GM10248 (cell line): ENCODE measurements at regions of chr12 and their contacts with region 1.

Region 1: GRCh38 chr12:50132505-50133135 is 20.6 kb downstream of the COX14 start:
- DNase-seq: peak; percentile 42
- CTCF ChIP-seq: peak; percentile 59

Region 2: GRCh38 chr12:49998453-49998852 is 134.2 kb before region 1 on chr12:
- CTCF ChIA-PET with region 1: no interaction called
- POLR2A ChIA-PET with region 1: no interaction called
- DNase-seq: no peak
- CTCF ChIP-seq: no peak

Region 3: DNA sequence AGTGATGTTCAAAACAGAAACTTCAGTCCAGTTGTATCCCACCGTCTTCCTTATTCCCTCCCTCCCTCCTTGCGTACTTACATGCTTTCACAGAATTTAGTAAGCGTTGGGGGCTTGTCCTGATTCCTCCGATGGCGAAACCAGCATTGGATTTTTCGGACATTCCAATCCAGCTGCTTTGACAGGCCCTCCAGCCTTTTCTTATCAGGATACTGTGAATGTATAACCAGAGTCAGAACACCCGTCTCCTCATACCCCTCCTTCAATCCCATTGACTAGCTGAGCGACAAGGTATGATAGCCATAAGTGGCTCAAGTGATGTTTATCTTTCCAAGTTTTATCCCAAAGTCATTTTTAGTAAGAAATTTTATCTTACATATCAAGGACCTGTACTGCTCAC is 10.4 kb after region 1 on chr12:
- CTCF ChIA-PET with region 1: interaction called, 15 read pairs
- POLR2A ChIA-PET with region 1: no interaction called
- DNase-seq: no peak
- CTCF ChIP-seq: no peak

Region 4: GRCh38 chr12:50151047-50151687 is 18.5 kb after region 1 on chr12:
- CTCF ChIA-PET with region 1: interaction called, 15 read pairs
- POLR2A ChIA-PET with region 1: interaction called, 8 read pairs
- DNase-seq: no peak
- CTCF ChIP-seq: no peak

Region 5: GRCh38 chr12:50162230-50162629 is 29.6 kb after region 1 on chr12:
- CTCF ChIA-PET with region 1: interaction called, 11 read pairs
- POLR2A ChIA-PET with region 1: no interaction called
- DNase-seq: no peak
- CTCF ChIP-seq: no peak

Region 6: DNA sequence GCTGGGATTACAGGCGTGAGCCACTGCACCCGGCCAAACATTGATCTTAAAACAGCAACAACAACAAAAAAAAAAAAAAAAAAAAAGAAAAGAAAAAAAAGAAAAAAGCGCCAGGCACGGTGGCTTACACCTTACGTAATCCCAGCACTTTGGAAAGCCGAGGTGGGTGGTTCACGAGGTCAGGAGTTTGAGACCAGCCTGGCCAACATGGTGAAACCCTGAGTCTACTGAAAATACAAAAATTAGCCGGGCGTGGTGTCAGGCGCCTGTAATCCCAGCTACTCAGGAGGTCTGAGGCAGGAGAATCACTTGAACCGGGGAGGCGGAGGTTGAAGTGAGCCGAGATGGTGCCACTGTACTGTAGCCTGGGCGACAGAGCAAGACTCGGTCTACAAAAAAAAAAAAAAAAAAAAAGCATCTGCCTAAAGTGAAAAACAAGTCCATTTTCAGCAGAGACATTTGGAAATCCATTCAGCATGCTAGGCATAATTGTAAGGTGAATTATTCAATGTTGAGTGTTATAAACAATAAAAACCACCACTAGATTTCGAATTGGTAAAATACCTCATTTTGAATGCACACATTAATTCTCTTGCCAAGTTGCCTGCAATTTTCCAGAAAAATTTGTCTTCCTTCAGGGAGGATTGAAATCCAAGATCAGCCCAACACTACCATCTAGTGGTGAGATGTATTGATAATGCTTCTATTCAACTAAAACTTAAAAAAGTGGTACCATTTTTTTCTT is 42.5 kb after region 1 on chr12:
- CTCF ChIA-PET with region 1: interaction called, 24 read pairs
- POLR2A ChIA-PET with region 1: no interaction called
- DNase-seq: peak; percentile 39
- CTCF ChIP-seq: peak; percentile 38